Heart left ventricle (tissue), 16 donors: ENCODE measurements at regions of chr10 and their contacts with region 1.

Region 1: DNA sequence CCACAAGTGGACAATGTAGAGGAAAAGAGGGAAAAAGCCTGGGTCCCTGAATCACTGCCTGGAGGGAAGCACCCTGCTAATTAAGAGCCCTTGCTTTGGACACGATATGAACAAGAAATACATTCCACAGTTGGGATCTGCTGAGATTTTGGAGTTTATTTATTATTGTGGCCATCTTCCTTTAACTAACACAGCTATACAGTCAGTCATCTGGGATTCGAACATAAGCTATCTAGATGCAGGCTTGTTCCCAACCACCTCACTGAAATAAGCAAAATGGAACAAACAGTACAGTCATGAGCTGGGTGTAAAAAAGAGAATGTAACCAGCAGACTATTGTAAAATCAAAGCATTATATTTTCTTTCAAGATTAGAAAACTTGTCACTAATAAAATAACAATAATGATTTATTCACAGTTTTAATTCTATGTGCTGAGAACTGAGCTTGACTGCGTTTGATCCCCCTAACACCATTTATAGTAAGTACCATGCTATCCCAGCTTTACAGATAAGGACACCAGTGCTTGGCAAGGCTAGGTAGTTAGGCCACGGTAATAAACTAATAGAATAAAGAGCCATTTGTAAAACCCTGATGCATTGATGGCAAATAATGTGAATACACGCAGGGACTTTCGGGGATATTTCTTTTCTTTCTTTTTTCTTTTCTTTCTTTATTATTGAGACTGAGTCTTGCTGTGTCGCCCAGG is 223.8 kb upstream of the KLF6 start:
- DNase-seq: no peak
- ATAC-seq: peak in 1 of 4 donors; percentile 51
- H3K4me3 ChIP-seq: no peak overlapping the region
- H3K27ac ChIP-seq: no peak overlapping the region
- H3K4me1 ChIP-seq: peaks cover 0 to 29% (median 0%) of the 10 kb centered on the region in 12 donors
- H3K27me3 ChIP-seq: no peaks in the 10 kb centered on the region
- CTCF ChIP-seq: no peak
- POLR2A ChIP-seq: no peak

Region 2: GRCh38 chr10:4063717-4064116 is 54.9 kb after region 1 on chr10:
- intact Hi-C with region 1: loop called in 1 of 10 experiments (anchors 2 kb)
- DNase-seq: no peak
- ATAC-seq: no peak
- H3K4me3 ChIP-seq: no peak overlapping the region
- H3K27ac ChIP-seq: peak overlapping the region in 1 of 12 donors; percentile 3
- H3K4me1 ChIP-seq: peaks cover 0 to 35% (median 15%) of the 10 kb centered on the region in 12 donors
- H3K27me3 ChIP-seq: no peaks in the 10 kb centered on the region
- CTCF ChIP-seq: no peak
- POLR2A ChIP-seq: no peak